Activated B cell treated with CpG ODN at 0.5 μM for 24 hours (primary cell): ENCODE measurements at regions of chr16 and their contacts with region 1.

Region 1: GRCh38 chr16:23496826-23497542 is 13.3 kb downstream of the GGA2 start:
- DNase-seq: no peak
- ATAC-seq: peak; percentile 88
- H3K4me3 Mint-ChIP-seq: peak overlapping the region; percentile 28
- H3K27ac Mint-ChIP-seq: peak overlapping the region; percentile 73
- H3K4me1 Mint-ChIP-seq: peaks cover 69% of the 10 kb centered on the region
- H3K27me3 Mint-ChIP-seq: no peaks in the 10 kb centered on the region
- CTCF ChIP-seq: no peak

Region 2: GRCh38 chr16:23510164-23510914 is 13.4 kb after region 1 on chr16 and contains the start of gene GGA2:
- CTCF ChIA-PET with region 1: interaction called, 4 read pairs
- POLR2A ChIA-PET with region 1: interaction called, 55 read pairs
- intact Hi-C with region 1: no loop called
- DNase-seq: peak; percentile 77
- ATAC-seq: peak; percentile 75
- H3K4me3 Mint-ChIP-seq: peak within 1 kb of the TSS; percentile 90
- H3K27ac Mint-ChIP-seq: peak within 1 kb of the TSS; percentile 95
- H3K4me1 Mint-ChIP-seq: peaks cover 59% of the 10 kb centered on the region
- H3K27me3 Mint-ChIP-seq: no peaks in the 10 kb centered on the region
- CTCF ChIP-seq: no peak
- total RNA-seq, gene GGA2: 264 and 281 TPM in 2 replicates

Region 3: GRCh38 chr16:23530062-23530461 is 33.1 kb after region 1 on chr16:
- CTCF ChIA-PET with region 1: no interaction called
- POLR2A ChIA-PET with region 1: interaction called, 10 read pairs
- intact Hi-C with region 1: no loop called
- DNase-seq: no peak
- ATAC-seq: no peak
- H3K4me3 Mint-ChIP-seq: no peak overlapping the region
- H3K27ac Mint-ChIP-seq: no peak overlapping the region
- H3K4me1 Mint-ChIP-seq: no peaks in the 10 kb centered on the region
- H3K27me3 Mint-ChIP-seq: no peaks in the 10 kb centered on the region
- CTCF ChIP-seq: no peak

Region 4: GRCh38 chr16:23728112-23728477 is 231.1 kb after region 1 on chr16:
- CTCF ChIA-PET with region 1: no interaction called
- POLR2A ChIA-PET with region 1: no interaction called
- intact Hi-C with region 1: no loop called
- DNase-seq: no peak
- ATAC-seq: no peak
- H3K4me3 Mint-ChIP-seq: no peak overlapping the region
- H3K27ac Mint-ChIP-seq: no peak overlapping the region
- H3K4me1 Mint-ChIP-seq: peaks cover 2% of the 10 kb centered on the region
- H3K27me3 Mint-ChIP-seq: peaks cover 16% of the 10 kb centered on the region
- CTCF ChIP-seq: no peak